ENCODE measurements at regions of chr19 and their contacts with region 1.

Region 1: DNA sequence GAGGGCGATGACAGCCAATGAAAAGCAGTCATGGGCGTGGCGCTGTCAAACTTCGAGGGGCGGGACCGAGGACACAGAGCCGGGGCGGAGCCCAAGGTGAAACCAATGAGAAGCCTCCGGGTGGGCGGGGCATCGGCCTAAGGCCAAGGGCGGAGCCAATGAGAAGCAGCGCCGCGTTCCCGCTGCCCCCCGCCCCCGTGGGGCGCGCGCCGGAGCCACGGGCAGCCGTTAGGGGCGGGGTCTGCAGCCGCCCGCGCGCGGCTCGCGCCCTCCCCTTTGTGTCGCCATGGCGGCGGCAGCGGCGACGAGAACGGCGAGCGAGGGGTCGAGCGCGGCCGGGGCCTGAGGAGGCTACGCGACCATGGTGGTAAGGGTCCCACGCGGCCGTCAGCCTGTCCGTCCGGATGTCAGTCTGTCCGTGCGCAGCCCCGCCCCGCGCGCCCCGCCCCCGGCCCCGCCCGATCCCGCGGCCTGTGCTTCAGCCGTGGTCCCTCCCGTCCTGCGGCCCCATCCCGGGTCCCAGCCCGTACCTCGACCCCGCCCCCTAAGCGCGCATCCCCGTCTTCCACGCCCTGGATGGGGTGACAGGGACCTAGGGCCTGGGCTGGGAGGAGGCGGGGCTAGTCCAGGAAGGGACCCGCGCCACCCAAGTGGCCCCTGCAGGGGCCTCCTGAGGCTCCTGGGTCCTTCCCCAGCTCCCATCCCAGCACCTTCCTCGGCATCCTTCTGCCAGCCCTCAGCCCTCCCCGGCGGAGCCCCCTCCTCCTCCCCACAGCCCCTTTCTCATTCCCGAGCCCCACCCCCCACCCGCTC is at the start of gene ARHGAP33:
- DNase-seq: peak; percentile 99 to 100
- ATAC-seq: peak; percentile 99
- H3K4me3 ChIP-seq: peak within 1 kb of the TSS; percentile 73 to 91
- H3K27ac ChIP-seq: no peak within 1 kb of the TSS
- H3K4me1 ChIP-seq: no peaks in the 10 kb centered on the region
- H3K27me3 ChIP-seq: no peaks in the 10 kb centered on the region
- total RNA-seq, gene ARHGAP33: 12.3 to 27.8 TPM

Region 2: DNA sequence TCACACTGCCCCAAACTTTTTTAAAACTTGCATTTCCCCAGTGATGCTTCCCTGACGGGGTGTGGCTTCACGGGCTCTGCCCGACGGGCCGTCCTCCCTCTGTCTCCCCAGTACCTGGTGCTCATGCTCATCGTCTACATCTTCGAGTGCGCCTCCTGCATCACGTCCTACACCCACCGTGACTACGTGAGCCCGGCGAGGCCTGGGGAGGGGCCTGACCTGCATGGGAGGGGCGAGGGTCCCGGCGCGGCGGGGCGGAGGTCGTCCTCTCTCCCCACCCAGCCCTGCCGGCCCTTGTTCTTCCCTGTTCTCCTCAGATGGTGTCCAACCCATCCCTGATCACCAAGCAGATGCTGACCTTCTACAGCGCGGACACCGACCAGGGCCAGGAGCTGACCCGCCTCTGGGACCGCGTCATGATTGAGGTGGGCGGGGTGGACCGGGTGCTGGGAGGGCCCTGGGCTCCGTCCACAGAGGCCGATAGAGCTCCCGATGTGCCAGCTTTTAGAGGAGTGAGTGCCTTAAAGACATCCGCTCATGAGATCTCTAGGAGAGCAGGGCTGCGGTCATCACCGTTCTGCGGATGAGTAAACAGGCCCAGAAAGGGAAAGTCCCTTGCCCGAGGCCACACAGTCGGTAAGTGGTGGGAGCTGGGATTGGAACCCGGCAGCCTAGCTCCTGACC is 102.2 kb before region 1 on chr19:
- intact Hi-C with region 1: no loop called
- DNase-seq: peak; percentile 62 to 81
- ATAC-seq: no peak
- H3K4me3 ChIP-seq: no peak overlapping the region
- H3K27ac ChIP-seq: no peak overlapping the region
- H3K4me1 ChIP-seq: no peaks in the 10 kb centered on the region
- H3K27me3 ChIP-seq: no peaks in the 10 kb centered on the region

Region 3: DNA sequence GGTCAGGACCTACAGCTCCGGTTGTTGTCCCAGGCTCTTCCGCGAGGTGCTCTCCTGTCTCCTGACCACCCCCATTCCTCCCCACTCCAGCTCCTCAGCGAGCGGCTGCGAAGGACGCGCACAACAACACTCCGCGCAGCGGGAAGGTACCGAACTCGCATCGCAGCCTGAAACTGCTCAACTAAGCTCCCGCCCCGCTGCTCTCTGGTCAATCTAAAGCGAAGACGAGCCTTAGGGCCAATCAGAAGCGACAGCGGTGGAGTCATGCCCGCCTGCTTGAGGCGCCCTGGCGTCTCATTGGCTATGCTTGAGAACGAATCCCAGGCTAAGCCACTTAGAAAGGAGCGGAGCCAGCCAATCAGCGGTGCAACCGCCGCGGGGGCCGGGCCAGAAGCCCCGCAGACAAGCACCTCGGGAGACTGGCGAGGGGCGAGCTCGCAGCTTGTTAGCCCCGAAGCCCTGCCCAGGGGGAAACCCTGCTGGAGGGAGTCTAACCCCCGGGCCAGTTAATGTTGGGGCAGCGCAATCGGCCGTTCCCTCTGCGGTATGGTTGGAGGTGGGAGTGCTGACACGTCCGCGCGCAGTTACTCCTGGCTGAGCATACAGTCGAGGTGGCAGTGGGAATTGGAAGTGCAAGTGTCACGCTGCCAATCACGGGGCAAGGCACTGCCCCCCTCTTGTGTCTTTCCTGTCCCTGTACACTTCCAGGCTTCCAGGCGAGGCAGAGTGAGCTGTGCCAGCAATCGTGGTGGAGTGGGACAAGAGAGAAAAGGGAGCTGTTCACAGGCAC is 73.1 kb before region 1 on chr19:
- intact Hi-C with region 1: no loop called
- DNase-seq: peak; percentile 97 to 98
- ATAC-seq: peak; percentile 99
- H3K4me3 ChIP-seq: peak overlapping the region; percentile 47 to 65
- H3K27ac ChIP-seq: no peak overlapping the region
- H3K4me1 ChIP-seq: no peaks in the 10 kb centered on the region
- H3K27me3 ChIP-seq: no peaks in the 10 kb centered on the region

Region 4: DNA sequence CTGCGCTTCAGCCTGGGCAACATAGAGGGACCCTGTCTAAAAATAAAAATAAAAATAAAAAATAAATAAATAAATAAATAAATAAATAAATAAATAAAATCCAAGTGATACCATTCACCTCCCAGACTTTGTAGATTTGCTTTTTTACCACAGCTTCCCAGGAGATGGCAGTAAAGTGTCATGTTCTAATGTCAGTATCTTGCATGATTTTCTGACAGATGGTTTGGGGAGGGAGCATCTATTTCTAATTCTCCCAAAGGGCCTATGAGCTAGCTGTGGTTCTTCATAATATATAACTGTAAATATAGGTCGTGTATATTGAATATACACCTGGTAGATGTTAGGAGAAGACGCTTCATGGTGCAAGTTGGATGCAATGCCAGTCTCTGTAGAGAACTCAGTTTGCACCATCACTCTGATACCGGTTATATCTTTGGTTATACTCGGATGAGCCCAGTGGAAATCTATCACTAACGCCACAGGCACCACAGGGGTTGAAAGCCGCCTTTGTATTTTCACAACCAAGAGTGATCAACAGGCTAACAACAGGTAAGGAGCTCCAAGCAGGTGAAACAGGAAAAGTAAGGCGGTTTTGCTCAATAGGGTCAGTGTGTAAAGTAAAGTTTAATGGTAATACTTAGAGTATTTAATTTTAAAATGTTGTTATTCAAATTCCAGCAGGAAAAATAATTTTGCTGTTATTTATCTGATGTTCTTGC is 106.8 kb after region 1 on chr19:
- intact Hi-C with region 1: loop called in 1 of 2 experiments (anchors 5 kb)
- DNase-seq: no peak
- ATAC-seq: no peak
- H3K4me3 ChIP-seq: no peak overlapping the region
- H3K27ac ChIP-seq: no peak overlapping the region
- H3K4me1 ChIP-seq: no peaks in the 10 kb centered on the region
- H3K27me3 ChIP-seq: no peaks in the 10 kb centered on the region

Region 5: GRCh38 chr19:36032251-36033104 is 257.0 kb after region 1 on chr19 and contains the start of gene CLIP3:
- intact Hi-C with region 1: no loop called
- DNase-seq: peak; percentile 83 to 93
- ATAC-seq: peak; percentile 90
- H3K4me3 ChIP-seq: peak within 1 kb of the TSS; percentile 80 to 94
- H3K27ac ChIP-seq: peak within 1 kb of the TSS in 1 of 2 donors; percentile 22
- H3K4me1 ChIP-seq: no peaks in the 10 kb centered on the region
- H3K27me3 ChIP-seq: no peaks in the 10 kb centered on the region
- total RNA-seq, gene CLIP3: 35.1 to 37.1 TPM